ENCODE measurements at regions of chr20 and their contacts with region 1.

Region 1: GRCh38 chr20:44959638-44960102 is 527 bp downstream of the TOMM34 start:
- DNase-seq: no peak
- H3K4me3 ChIP-seq: peak overlapping the region; percentile 83 to 93 (median 83)
- H3K27ac ChIP-seq: peak overlapping the region; percentile 83 to 92
- H3K4me1 ChIP-seq: no peaks in the 10 kb centered on the region
- H3K27me3 ChIP-seq: no peaks in the 10 kb centered on the region
- CTCF ChIP-seq: no peak
- POLR2A ChIP-seq: no peak

Region 2: DNA sequence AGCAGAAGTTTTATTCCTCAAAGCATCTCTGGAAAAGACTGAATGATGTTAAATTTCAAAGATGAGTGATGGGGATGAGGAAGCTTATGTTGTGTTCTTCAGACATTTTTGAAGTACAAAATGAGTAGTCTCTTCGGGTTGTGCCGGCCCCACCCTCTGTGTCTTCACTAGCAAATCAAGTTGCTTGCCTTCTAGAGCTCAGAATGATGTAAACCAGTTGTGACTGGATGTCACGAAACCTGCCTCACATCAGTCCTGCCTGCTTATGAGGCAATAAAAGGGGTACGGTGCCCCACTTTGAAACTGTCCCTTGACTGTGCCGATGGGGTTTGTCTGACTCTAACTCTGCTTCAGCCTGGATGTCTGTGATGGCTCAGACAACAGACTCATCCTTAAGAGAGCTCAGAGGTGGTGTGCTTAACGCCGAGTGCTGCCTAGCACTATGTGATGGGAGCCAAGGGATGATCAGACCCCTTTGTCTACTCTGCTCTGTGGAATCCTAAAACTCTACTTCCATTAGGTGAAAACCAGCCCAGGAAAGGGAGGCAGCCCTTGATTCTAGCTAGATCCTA is 18.5 kb before region 1 on chr20:
- intact Hi-C with region 1: loop called (anchors 1 kb)
- DNase-seq: no peak
- H3K4me3 ChIP-seq: no peak overlapping the region
- H3K27ac ChIP-seq: no peak overlapping the region
- H3K4me1 ChIP-seq: no peaks in the 10 kb centered on the region
- H3K27me3 ChIP-seq: no peaks in the 10 kb centered on the region
- CTCF ChIP-seq: no peak
- POLR2A ChIP-seq: no peak